Ovary (tissue), 10 donors: ENCODE measurements at regions of chr16 and their contacts with region 1.

Region 1: GRCh38 chr16:57906382-57907316 is 64.3 kb downstream of the CNGB1 start:
- DNase-seq: no peak
- H3K4me3 ChIP-seq: no peak overlapping the region
- H3K27ac ChIP-seq: no peak overlapping the region
- H3K4me1 ChIP-seq: no peaks in the 10 kb centered on the region
- H3K27me3 ChIP-seq: no peaks in the 10 kb centered on the region
- CTCF ChIP-seq: no peak
- EP300 ChIP-seq: no peak
- POLR2A ChIP-seq: no peak

Region 2: GRCh38 chr16:57976331-57976796 is 69.7 kb after region 1 on chr16:
- intact Hi-C with region 1: no loop called
- DNase-seq: no peak
- H3K4me3 ChIP-seq: no peak overlapping the region
- H3K27ac ChIP-seq: no peak overlapping the region
- H3K4me1 ChIP-seq: no peaks in the 10 kb centered on the region
- H3K27me3 ChIP-seq: no peaks in the 10 kb centered on the region
- CTCF ChIP-seq: no peak
- EP300 ChIP-seq: no peak
- POLR2A ChIP-seq: no peak

Region 3: DNA sequence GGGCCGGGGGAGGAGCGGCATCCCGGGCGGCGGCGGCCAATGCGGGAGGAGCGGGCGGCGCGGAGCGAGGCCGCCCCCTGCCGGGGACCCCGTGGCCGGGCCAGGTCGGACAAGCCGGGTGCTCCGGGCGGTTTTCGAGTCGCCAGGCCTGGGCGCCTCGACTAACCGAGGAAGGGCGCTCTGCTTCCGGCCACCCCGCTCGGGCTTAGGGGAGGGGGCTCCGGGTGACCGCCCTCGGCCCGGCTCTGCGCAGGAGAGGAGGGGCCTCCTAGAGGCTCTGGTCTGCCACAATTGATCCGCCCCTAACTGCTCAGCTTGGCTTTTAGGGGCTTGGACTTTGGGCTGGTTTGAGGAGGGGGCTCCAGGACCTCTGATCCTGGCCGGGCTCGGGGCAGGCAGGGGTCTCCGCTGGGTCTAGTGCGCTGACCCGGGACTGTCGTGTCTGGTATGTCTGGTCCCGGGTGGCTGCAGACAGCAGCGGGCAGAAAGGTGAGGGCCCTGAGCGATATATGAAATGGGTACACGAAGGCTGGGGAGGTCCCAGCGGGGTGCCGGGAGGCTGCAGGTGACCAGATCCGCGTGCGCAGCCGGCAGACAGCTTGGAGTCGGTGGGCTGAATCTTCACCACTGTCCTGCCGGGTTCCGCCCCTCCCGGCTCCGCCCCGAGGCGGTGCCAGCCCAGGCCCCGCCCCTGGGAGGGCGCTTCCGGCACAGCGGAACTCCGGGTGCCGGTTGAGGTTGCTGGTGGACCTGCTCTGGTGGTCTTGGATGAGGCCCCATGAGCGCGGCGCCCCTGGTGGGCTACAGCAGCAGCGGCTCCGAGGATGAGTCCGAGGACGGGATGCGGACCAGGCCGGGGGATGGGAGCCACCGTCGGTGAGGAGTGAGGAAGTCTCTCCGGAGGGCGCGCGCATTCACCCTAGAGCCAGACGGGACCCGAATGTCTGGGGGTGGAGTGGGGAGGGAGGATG is 94.3 kb after region 1 on chr16 and contains the start of gene USB1:
- intact Hi-C with region 1: loop called in 3 of 4 experiments (anchors 5 to 10 kb)
- DNase-seq: peak; percentile 80 to 92 (median 88)
- H3K4me3 ChIP-seq: peak within 1 kb of the TSS; percentile 69
- H3K27ac ChIP-seq: peak within 1 kb of the TSS; percentile 64 to 77
- H3K4me1 ChIP-seq: peaks cover 4% of the 10 kb centered on the region
- H3K27me3 ChIP-seq: no peaks in the 10 kb centered on the region
- CTCF ChIP-seq: peak; percentile 54 to 73 (median 58)
- EP300 ChIP-seq: no peak
- POLR2A ChIP-seq: peak; percentile 38
- total RNA-seq, gene USB1: 8.5 to 30.7 (median 22.5) TPM

Region 4: GRCh38 chr16:58011652-58012051 is 105.0 kb after region 1 on chr16:
- intact Hi-C with region 1: loop called in 1 of 4 experiments (anchors 5 kb)
- DNase-seq: no peak
- H3K4me3 ChIP-seq: no peak overlapping the region
- H3K27ac ChIP-seq: no peak overlapping the region
- H3K4me1 ChIP-seq: no peaks in the 10 kb centered on the region
- H3K27me3 ChIP-seq: no peaks in the 10 kb centered on the region
- CTCF ChIP-seq: no peak
- EP300 ChIP-seq: no peak
- POLR2A ChIP-seq: no peak